ENCODE measurements at regions of chr11 and their contacts with region 1.

Region 1: DNA sequence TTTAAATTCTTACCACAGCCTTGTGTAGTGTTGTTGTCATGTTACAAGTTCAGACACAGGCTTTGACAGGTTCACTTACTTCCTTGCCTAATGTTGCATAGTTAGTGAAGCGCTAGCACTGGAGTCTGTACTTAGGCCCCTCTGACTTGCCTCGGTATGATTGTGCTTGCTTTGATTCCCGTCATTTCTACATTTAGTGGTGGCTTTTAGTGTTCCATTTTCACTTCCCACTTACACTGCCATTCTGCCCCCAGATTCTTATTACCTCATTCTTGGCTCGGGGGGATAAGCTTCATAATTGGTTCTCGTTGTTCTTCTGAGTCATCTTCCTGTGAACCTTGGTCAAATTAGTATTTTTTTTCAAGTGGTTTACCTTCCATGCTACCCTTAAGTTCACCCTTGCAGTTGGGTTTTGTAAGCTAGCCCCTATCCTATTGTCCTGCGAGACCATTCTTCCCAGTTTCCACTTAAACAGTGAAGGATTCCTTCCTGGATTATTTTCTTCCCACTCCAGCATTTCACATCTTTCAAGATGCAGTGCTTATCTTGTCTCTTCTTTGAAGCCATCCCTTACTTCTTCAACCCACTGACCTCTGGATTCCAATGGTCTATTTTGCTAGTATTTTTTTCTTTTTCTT is 68.7 kb downstream of the DDX10 start:
- DNase-seq: peak; percentile 25
- H3K4me3 Mint-ChIP-seq: peak overlapping the region; percentile 55
- H3K27ac Mint-ChIP-seq: peak overlapping the region; percentile 88
- H3K4me1 Mint-ChIP-seq: peaks cover 44% of the 10 kb centered on the region
- H3K27me3 Mint-ChIP-seq: no peaks in the 10 kb centered on the region

Region 2: DNA sequence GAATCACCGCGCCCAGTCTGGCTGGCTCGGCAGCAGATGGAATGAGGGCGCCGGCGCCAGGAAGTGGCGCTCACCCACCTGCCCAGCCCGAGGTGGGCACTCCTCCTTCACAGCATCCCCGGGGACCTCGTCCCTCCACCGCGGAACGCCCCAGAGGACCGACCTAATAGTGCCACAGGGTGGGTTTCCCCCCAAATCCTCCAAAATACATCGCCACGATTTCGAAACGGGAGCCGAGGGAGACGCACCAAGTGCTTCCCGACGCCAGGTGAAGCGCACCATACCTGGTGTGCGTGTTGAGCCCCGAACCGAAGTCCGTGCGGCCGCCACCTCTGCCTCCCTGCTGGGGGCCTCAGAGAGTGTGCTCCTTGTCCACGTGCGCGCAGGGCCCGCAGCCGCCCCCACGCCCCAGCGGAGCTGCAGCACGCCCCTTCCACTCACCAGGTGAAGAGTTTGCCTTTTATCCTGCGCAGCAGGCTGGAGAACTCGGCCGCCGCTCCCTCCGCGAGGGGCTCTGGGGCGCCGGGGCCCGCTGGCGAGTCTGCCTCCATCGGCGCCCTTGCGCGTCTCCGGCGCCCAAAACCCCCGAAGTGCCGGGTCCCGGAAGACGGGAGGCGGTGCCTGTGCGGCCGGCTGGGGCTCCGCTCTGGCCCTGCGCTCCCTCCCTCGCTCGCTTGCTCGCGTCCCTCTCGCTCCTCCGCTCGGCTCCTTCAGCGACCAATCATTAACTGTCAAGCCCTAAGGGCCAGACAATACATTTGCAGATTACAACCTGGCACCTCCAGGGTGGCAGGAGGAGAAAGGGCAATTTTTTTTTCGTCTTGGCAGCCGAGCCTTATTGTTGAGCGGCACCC is 875.2 kb before region 1 on chr11 and contains the start of gene SLC35F2:
- intact Hi-C with region 1: loop called (anchors 1 kb)
- DNase-seq: peak; percentile 62
- H3K4me3 Mint-ChIP-seq: peak within 1 kb of the TSS; percentile 95
- H3K27ac Mint-ChIP-seq: peak within 1 kb of the TSS; percentile 83
- H3K4me1 Mint-ChIP-seq: peaks cover 26% of the 10 kb centered on the region
- H3K27me3 Mint-ChIP-seq: peaks cover 8% of the 10 kb centered on the region
- total RNA-seq, gene SLC35F2: 36.5 and 38.0 TPM in 2 replicates

Region 3: DNA sequence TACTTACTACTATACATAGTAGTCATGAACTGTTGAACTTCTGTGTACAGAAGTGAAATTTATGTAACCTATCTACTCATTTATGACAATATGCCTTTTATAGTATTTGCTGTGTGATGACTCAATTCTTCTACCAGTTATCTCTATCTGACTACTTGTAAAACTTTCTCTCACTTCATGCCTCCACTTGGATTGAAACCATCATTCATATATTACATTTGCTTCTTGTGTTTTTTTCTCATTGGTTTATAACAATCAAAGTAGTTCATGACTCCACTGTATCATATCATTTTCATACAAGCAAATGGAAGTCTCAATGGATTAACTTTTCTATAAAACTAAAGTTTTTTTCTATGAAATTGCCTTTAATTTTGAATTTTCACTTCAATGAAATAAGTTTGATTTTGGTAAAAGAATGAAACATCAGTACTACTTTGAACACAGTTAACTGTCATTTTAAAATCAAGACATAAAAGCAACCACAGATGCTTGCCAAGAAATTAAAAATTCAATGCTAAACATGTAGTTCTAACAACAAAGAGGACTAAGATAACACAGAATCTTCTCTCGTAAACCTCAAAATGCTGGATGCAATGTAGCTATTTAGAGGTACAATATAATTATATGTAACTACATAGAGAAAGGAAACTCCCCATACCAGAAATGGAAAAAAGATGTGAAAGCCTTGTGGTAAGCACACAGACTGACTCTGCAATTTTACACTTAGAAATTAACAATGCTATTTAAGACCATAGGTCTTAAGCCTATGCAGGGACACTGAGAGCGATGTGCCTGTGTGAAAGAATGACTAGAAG is 112.4 kb before region 1 on chr11:
- intact Hi-C with region 1: loop called (anchors 5 kb)
- DNase-seq: no peak
- H3K4me3 Mint-ChIP-seq: no peak overlapping the region
- H3K27ac Mint-ChIP-seq: no peak overlapping the region
- H3K4me1 Mint-ChIP-seq: peaks cover 18% of the 10 kb centered on the region
- H3K27me3 Mint-ChIP-seq: peaks cover 7% of the 10 kb centered on the region

Region 4: GRCh38 chr11:108713076-108713790 is 20.4 kb before region 1 on chr11:
- intact Hi-C with region 1: loop called (anchors 1 kb)
- DNase-seq: no peak
- H3K4me3 Mint-ChIP-seq: peak overlapping the region; percentile 19
- H3K27ac Mint-ChIP-seq: peak overlapping the region; percentile 92
- H3K4me1 Mint-ChIP-seq: peaks cover 44% of the 10 kb centered on the region
- H3K27me3 Mint-ChIP-seq: no peaks in the 10 kb centered on the region

Region 5: GRCh38 chr11:108788565-108789199 is 55.1 kb after region 1 on chr11:
- intact Hi-C with region 1: loop called (anchors 1 kb)
- DNase-seq: no peak
- H3K4me3 Mint-ChIP-seq: no peak overlapping the region
- H3K27ac Mint-ChIP-seq: no peak overlapping the region
- H3K4me1 Mint-ChIP-seq: peaks cover 28% of the 10 kb centered on the region
- H3K27me3 Mint-ChIP-seq: no peaks in the 10 kb centered on the region

Region 6: GRCh38 chr11:109971184-109971523 is 1237.6 kb after region 1 on chr11:
- intact Hi-C with region 1: loop called (anchors 5 kb)
- DNase-seq: no peak
- H3K4me3 Mint-ChIP-seq: peak overlapping the region; percentile 57
- H3K27ac Mint-ChIP-seq: peak overlapping the region; percentile 82
- H3K4me1 Mint-ChIP-seq: peaks cover 45% of the 10 kb centered on the region
- H3K27me3 Mint-ChIP-seq: peaks cover 7% of the 10 kb centered on the region